ENCODE measurements at regions of chr3 and their contacts with region 1.

Region 1: DNA sequence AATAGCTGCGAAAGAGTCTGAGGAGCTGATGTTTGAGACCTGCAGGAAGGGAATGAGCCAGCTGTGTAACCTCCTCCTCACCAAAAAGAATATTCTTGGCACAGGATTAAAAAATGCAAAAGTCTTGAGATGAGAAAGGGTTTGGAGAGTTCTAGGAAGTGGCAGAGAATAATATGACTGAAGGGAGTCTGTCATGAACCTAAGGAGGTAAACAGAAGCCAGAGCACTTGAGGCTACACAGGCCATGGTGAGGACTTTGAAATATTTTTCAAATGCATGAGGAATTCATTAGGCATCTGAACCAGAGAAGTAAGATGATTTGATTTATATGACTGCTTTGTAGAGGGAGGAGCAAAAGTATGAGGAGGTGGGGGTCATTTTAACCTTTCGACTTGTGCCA is 347.8 kb downstream of the EPHA3 start:
- DNase-seq: no peak
- ATAC-seq: no peak
- H3K4me3 ChIP-seq: no peak overlapping the region
- H3K27ac ChIP-seq: no peak overlapping the region
- H3K4me1 ChIP-seq: no peaks in the 10 kb centered on the region
- H3K27me3 ChIP-seq: no peaks in the 10 kb centered on the region
- CTCF ChIP-seq: no peak

Region 2: DNA sequence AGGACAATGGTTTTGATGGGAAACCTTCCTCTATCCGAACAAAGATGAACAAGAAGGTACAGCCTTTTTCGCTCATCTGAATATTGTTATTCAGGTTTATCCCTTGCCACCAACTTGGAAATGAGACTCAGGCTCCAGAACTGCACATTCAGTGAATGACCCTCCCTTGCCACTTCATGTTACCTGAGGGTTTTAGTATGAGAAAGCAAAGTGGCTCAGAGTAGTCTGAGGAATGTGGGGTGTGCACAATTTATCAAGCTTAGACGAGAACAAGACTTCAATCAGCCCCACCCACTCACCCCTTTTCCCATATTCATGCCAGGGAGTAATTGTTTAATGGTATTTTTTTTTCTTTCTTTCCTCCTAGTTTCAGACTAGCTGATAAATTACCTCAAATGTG is 1913.5 kb before region 1 on chr3:
- intact Hi-C with region 1: loop called in 1 of 2 experiments (anchors 10 kb)
- DNase-seq: no peak
- ATAC-seq: no peak
- H3K4me3 ChIP-seq: no peak overlapping the region
- H3K27ac ChIP-seq: no peak overlapping the region
- H3K4me1 ChIP-seq: no peaks in the 10 kb centered on the region
- H3K27me3 ChIP-seq: no peaks in the 10 kb centered on the region
- CTCF ChIP-seq: no peak